K562 (cell line): ENCODE measurements at regions of chr21 and their contacts with region 1.

Region 1: GRCh38 chr21:45167796-45168222 is 93.4 kb downstream of the ADARB1 start:
- DNase-seq: peak in 1 of 4 experiments; percentile 20
- ATAC-seq: peak; percentile 58
- H3K4me3 ChIP-seq: no peak overlapping the region
- H3K27ac ChIP-seq: 0 out of 3 replicates have a peak overlapping the region, but pooled peaks have one; percentile 3
- H3K4me1 ChIP-seq: peaks cover 3 to 9% of the 10 kb centered on the region in 2 experiments
- H3K27me3 ChIP-seq: no peaks in the 10 kb centered on the region; a peak in 1 of 5 replicates
- CTCF ChIP-seq: no peak
- EP300 ChIP-seq: no peak
- POLR2A ChIP-seq: peak; percentile 68
- RAD21 ChIP-seq: no peak

Region 2: GRCh38 chr21:45074048-45074817 is 93.6 kb before region 1 on chr21 and contains the start of gene ADARB1:
- CTCF ChIA-PET with region 1: no interaction called
- POLR2A ChIA-PET with region 1: no interaction called
- in situ Hi-C with region 1: no loop called
- intact Hi-C with region 1: no loop called
- DNase-seq: peak; percentile 88 to 97 (median 96)
- ATAC-seq: peak; percentile 80
- H3K4me3 ChIP-seq: peak within 1 kb of the TSS; percentile 63
- H3K27ac ChIP-seq: peak within 1 kb of the TSS; percentile 68
- H3K4me1 ChIP-seq: peaks cover 39 to 40% of the 10 kb centered on the region in 2 experiments
- H3K27me3 ChIP-seq: no peaks in the 10 kb centered on the region; a peak in 1 of 5 replicates
- CTCF ChIP-seq: no peak
- EP300 ChIP-seq: no peak
- POLR2A ChIP-seq: peak; percentile 53; the same call in 1 of the 2 replicates
- RAD21 ChIP-seq: no peak
- polyA plus RNA-seq, gene ADARB1: 7.1 to 8.1 TPM

Region 3: DNA sequence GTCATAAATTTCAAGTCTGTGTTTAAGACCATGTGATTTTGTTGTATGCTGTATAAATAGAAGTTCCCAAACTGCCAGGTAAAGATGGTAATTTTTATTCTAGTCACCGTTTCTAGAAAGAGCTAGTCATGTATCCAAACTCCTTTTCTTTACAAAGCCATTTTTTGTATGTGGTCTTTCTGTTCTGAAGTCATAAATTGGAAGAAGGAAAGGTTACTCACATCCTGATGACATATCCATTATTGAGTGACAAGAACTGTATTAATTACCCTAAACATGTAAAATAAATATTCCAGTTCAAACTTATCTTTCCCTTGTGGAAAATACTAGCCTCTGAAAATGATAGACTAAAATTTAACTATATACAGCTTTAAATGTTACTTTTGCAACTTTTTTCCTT is 15.1 kb after region 1 on chr21:
- CTCF ChIA-PET with region 1: no interaction called
- POLR2A ChIA-PET with region 1: interaction called, 13 read pairs
- in situ Hi-C with region 1: no loop called
- intact Hi-C with region 1: no loop called
- DNase-seq: no peak
- ATAC-seq: no peak
- H3K4me3 ChIP-seq: no peak overlapping the region
- H3K27ac ChIP-seq: no peak overlapping the region
- H3K4me1 ChIP-seq: peaks cover 0 to 3% of the 10 kb centered on the region in 2 experiments; a peak in 1 of 5 replicates
- H3K27me3 ChIP-seq: peaks cover 0 to 25% of the 10 kb centered on the region in 2 experiments; a peak in 3 of 5 replicates
- CTCF ChIP-seq: no peak
- EP300 ChIP-seq: no peak
- POLR2A ChIP-seq: no peak
- RAD21 ChIP-seq: no peak